K562 (cell line): ENCODE measurements at regions of chr3 and their contacts with region 1.

Region 1: GRCh38 chr3:150408221-150409102 is at the start of gene TSC22D2:
- DNase-seq: peak; percentile 90 to 97 (median 92)
- ATAC-seq: peak; percentile 74
- H3K4me3 ChIP-seq: peak within 1 kb of the TSS; percentile 81
- H3K27ac ChIP-seq: peak within 1 kb of the TSS; percentile 97
- H3K4me1 ChIP-seq: peaks cover 0 to 25% of the 10 kb centered on the region in 2 experiments; a peak in 2 of 5 replicates
- H3K27me3 ChIP-seq: no peaks in the 10 kb centered on the region
- CTCF ChIP-seq: peak in 1 of 3 experiments; percentile 20; a peak in 2 of 6 replicates
- EP300 ChIP-seq: no peak
- POLR2A ChIP-seq: peak; percentile 96
- RAD21 ChIP-seq: peak in 1 of 2 experiments; percentile 35
- polyA plus RNA-seq, gene TSC22D2: 21.7 to 44.0 TPM

Region 2: DNA sequence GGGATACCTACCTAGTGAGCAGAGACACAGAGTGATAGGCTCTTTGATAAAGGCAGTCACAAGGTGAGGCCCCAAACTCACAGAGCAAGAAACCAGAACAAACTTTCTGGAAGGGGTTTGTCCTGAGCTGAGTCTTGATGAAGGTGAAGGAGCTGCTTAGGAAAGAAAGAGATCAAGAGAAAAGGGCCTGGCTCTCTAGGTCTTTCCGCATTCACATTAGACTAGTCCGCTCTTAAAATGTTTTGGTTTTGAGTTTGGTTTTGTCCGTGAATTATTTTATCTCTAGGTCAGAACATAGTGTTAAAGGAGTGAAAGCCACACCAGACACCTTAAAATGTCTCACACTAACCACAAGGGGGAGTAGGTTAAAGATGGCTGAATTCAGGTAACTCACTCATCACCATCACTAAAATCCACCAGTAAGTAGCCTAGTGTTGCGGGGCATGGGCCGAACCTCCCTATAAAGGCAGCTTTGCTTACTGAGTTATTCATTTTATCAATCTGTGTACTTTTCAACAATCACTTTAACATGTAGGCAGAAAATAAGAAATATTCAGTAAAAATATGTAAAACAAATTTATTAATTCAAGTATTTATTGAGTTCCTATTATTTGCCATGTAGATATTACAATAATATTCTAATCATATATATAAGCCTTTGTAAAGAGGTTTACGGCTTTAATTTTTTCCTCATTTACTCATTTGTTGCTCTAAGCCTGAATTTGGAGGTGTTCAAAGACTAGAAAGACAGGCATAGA is 121.9 kb before region 1 on chr3:
- CTCF ChIA-PET with region 1: no interaction called
- POLR2A ChIA-PET with region 1: interaction called, 3 read pairs
- in situ Hi-C with region 1: no loop called
- intact Hi-C with region 1: loop called (anchors 2 kb)
- DNase-seq: peak; percentile 47 to 67 (median 60)
- ATAC-seq: peak; percentile 98
- H3K4me3 ChIP-seq: no peak overlapping the region
- H3K27ac ChIP-seq: no peak overlapping the region
- H3K4me1 ChIP-seq: 0 out of 5 replicates have a peak, but pooled peaks cover 0 to 2% of the 10 kb centered on the region in 2 experiments
- H3K27me3 ChIP-seq: no peaks in the 10 kb centered on the region
- CTCF ChIP-seq: peak; percentile 58 to 69 (median 63); a peak in 5 of 6 replicates
- EP300 ChIP-seq: no peak
- POLR2A ChIP-seq: no peak
- RAD21 ChIP-seq: peak; percentile 64 to 74

Region 3: GRCh38 chr3:150371741-150372254 is 36.7 kb before region 1 on chr3:
- CTCF ChIA-PET with region 1: no interaction called
- POLR2A ChIA-PET with region 1: interaction called, 6 read pairs
- in situ Hi-C with region 1: no loop called
- intact Hi-C with region 1: loop called (anchors 5 kb)
- DNase-seq: peak; percentile 15 to 76 (median 42)
- ATAC-seq: peak; percentile 83
- H3K4me3 ChIP-seq: no peak overlapping the region
- H3K27ac ChIP-seq: peak overlapping the region; percentile 31; the same call in 1 of the 3 replicates
- H3K4me1 ChIP-seq: peaks cover 0 to 19% of the 10 kb centered on the region in 2 experiments; a peak in 3 of 5 replicates
- H3K27me3 ChIP-seq: no peaks in the 10 kb centered on the region
- CTCF ChIP-seq: no peak
- EP300 ChIP-seq: peak; percentile 23; the same call in 1 of the 2 replicates
- POLR2A ChIP-seq: no peak
- RAD21 ChIP-seq: no peak

Region 4: GRCh38 chr3:150428562-150428961 is 20.1 kb after region 1 on chr3:
- CTCF ChIA-PET with region 1: no interaction called
- POLR2A ChIA-PET with region 1: interaction called, 30 read pairs
- in situ Hi-C with region 1: no loop called
- intact Hi-C with region 1: no loop called
- DNase-seq: no peak
- ATAC-seq: no peak
- H3K4me3 ChIP-seq: no peak overlapping the region
- H3K27ac ChIP-seq: no peak overlapping the region
- H3K4me1 ChIP-seq: peaks cover 0 to 39% of the 10 kb centered on the region in 2 experiments; a peak in 3 of 5 replicates
- H3K27me3 ChIP-seq: no peaks in the 10 kb centered on the region
- CTCF ChIP-seq: no peak
- EP300 ChIP-seq: no peak
- POLR2A ChIP-seq: no peak
- RAD21 ChIP-seq: no peak

Region 5: DNA sequence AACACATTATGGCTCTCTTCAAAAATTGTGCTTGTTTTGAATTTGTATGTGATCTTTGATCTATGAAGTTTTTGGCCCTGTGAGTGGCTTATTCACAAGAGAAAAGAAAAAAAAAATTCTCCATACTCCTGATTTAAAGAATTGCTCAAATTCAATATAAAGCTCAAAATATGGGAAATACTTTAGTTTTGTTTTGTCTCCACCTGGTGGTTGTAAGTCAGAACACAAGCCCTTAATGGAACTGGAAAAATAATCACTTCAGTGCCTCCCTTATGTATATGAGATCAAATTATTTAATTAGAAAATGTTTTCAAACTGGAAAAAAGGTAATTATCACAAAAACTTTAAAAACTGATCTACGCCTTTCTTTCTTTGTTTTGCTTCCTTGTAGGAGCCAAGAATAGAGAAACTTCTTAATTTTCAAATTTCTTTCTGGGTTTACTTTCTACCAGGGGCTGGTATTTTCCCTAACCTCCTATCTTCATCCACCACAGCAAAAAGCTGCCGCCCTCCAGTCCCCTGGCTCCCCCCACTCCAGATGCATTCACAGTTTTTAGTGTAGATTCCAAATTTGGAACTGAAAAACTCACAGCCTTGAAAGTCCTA is 87.2 kb after region 1 on chr3:
- CTCF ChIA-PET with region 1: interaction called, 26 read pairs
- POLR2A ChIA-PET with region 1: interaction called, 10 read pairs
- in situ Hi-C with region 1: loop called (anchors 5 kb)
- intact Hi-C with region 1: loop called (anchors 1 kb)
- DNase-seq: peak; percentile 44 to 72 (median 50)
- ATAC-seq: peak; percentile 81
- H3K4me3 ChIP-seq: no peak overlapping the region
- H3K27ac ChIP-seq: peak overlapping the region; percentile 70; the same call in 1 of the 3 replicates
- H3K4me1 ChIP-seq: peaks cover 0 to 26% of the 10 kb centered on the region in 2 experiments; a peak in 4 of 5 replicates
- H3K27me3 ChIP-seq: no peaks in the 10 kb centered on the region
- CTCF ChIP-seq: peak; percentile 45 to 82 (median 64); a peak in 5 of 6 replicates
- EP300 ChIP-seq: no peak
- POLR2A ChIP-seq: no peak
- RAD21 ChIP-seq: peak; percentile 95 to 96

Region 6: GRCh38 chr3:150582620-150583019 is 174.2 kb after region 1 on chr3:
- CTCF ChIA-PET with region 1: no interaction called
- POLR2A ChIA-PET with region 1: no interaction called
- in situ Hi-C with region 1: no loop called
- intact Hi-C with region 1: no loop called
- DNase-seq: no peak
- ATAC-seq: no peak
- H3K4me3 ChIP-seq: no peak overlapping the region
- H3K27ac ChIP-seq: no peak overlapping the region
- H3K4me1 ChIP-seq: no peaks in the 10 kb centered on the region
- H3K27me3 ChIP-seq: no peaks in the 10 kb centered on the region
- CTCF ChIP-seq: no peak
- EP300 ChIP-seq: no peak
- POLR2A ChIP-seq: no peak
- RAD21 ChIP-seq: no peak

Region 7: GRCh38 chr3:150653110-150653561 is 244.7 kb after region 1 on chr3:
- CTCF ChIA-PET with region 1: no interaction called
- POLR2A ChIA-PET with region 1: no interaction called
- in situ Hi-C with region 1: no loop called
- intact Hi-C with region 1: no loop called
- DNase-seq: no peak
- ATAC-seq: no peak
- H3K4me3 ChIP-seq: no peak overlapping the region
- H3K27ac ChIP-seq: no peak overlapping the region
- H3K4me1 ChIP-seq: no peaks in the 10 kb centered on the region
- H3K27me3 ChIP-seq: no peaks in the 10 kb centered on the region; a peak in 1 of 5 replicates
- CTCF ChIP-seq: no peak
- EP300 ChIP-seq: no peak
- POLR2A ChIP-seq: no peak
- RAD21 ChIP-seq: no peak